ENCODE measurements at regions of chr18 and their contacts with region 1.

Region 1: GRCh38 chr18:31010601-31011000 is 31.9 kb downstream of the DSC3 start:
- DNase-seq: no peak
- H3K4me3 ChIP-seq: no peak overlapping the region
- H3K27ac ChIP-seq: no peak overlapping the region
- H3K4me1 ChIP-seq: no peaks in the 10 kb centered on the region
- H3K27me3 ChIP-seq: no peaks in the 10 kb centered on the region
- CTCF ChIP-seq: no peak
- EP300 ChIP-seq: no peak
- POLR2A ChIP-seq: no peak

Region 2: DNA sequence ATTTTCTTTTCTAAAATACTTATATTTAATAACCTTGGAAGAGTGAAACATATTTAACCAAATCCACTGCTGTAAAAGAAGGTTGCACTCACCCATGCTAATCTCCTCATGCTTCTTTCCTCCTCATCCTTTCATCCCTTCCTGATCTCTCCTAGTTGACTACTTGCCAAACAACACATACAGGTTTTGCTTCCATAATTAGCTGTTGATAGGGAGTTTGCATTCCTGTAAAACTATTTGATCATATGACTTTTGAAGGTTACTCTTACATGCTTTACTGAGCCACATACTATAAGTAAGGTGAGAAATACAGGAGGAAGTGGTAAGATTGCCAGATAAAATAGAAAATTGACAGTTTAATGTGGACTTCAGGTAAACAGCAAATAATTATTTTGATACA is 451.6 kb before region 1 on chr18:
- in situ Hi-C with region 1: no loop called
- intact Hi-C with region 1: no loop called
- DNase-seq: no peak
- H3K4me3 ChIP-seq: no peak overlapping the region
- H3K27ac ChIP-seq: no peak overlapping the region
- H3K4me1 ChIP-seq: peaks cover 0 to 7% (median 0%) of the 10 kb centered on the region in 4 donors
- H3K27me3 ChIP-seq: no peaks in the 10 kb centered on the region
- CTCF ChIP-seq: no peak
- EP300 ChIP-seq: no peak
- POLR2A ChIP-seq: no peak

Region 3: GRCh38 chr18:30903564-30903963 is 107.0 kb before region 1 on chr18:
- in situ Hi-C with region 1: loop called in 1 of 4 experiments (anchors 25 kb)
- intact Hi-C with region 1: no loop called
- DNase-seq: no peak
- H3K4me3 ChIP-seq: no peak overlapping the region
- H3K27ac ChIP-seq: no peak overlapping the region
- H3K4me1 ChIP-seq: no peaks in the 10 kb centered on the region
- H3K27me3 ChIP-seq: no peaks in the 10 kb centered on the region
- CTCF ChIP-seq: no peak
- EP300 ChIP-seq: no peak
- POLR2A ChIP-seq: no peak